ENCODE measurements at regions of chr3 and their contacts with region 1.

Region 1: GRCh38 chr3:34212656-34213055 is 414.2 kb downstream of the PDCD6IP start:
- DNase-seq: no peak
- ATAC-seq: no peak
- H3K4me3 ChIP-seq: no peak overlapping the region
- H3K27ac ChIP-seq: no peak overlapping the region
- H3K4me1 ChIP-seq: no peaks in the 10 kb centered on the region
- H3K27me3 ChIP-seq: no peaks in the 10 kb centered on the region
- CTCF ChIP-seq: no peak
- EP300 ChIP-seq: no peak
- POLR2A ChIP-seq: no peak
- RAD21 ChIP-seq: no peak

Region 2: DNA sequence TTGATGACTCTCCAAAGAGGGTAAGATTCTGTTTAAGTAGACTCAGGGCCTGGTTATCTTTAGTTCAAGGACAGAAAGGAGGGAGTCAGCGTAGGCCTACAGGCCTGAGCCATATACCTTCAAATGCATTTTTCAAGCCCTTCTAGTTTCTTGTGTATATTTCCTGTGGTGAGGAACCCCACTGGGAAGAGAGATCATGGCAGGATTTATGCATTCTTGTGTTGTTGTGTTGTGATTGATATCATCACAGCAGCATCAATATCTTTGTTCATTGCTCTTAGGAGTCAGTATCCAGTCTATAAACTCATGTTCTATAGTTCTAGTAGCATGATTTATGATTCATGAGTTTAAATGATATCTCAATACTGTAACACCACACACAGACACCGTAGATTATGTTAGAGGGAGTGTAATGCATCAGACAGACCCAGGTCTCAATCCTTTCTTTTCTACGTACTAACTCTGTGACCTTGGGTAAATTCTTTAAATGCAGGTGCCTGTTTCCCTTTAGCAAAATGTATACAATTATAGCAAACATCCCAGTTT is 13.2 kb after region 1 on chr3:
- CTCF ChIA-PET with region 1: interaction called, 3 read pairs
- POLR2A ChIA-PET with region 1: interaction called, 17 read pairs
- in situ Hi-C with region 1: no loop called
- intact Hi-C with region 1: no loop called
- DNase-seq: no peak
- ATAC-seq: no peak
- H3K4me3 ChIP-seq: no peak overlapping the region
- H3K27ac ChIP-seq: no peak overlapping the region
- H3K4me1 ChIP-seq: no peaks in the 10 kb centered on the region
- H3K27me3 ChIP-seq: no peaks in the 10 kb centered on the region
- CTCF ChIP-seq: no peak
- EP300 ChIP-seq: no peak
- POLR2A ChIP-seq: no peak
- RAD21 ChIP-seq: no peak

Measured in K562 (cell line).